HCT116 (cell line): ENCODE measurements at regions of chr11 and their contacts with region 1.

Region 1: GRCh38 chr11:44643217-44643616 is 77.8 kb downstream of the CD82 start:
- DNase-seq: no peak
- ATAC-seq: no peak
- H3K4me3 ChIP-seq: no peak overlapping the region
- H3K27ac ChIP-seq: no peak overlapping the region
- H3K4me1 ChIP-seq: no peaks in the 10 kb centered on the region
- H3K27me3 ChIP-seq: no peaks in the 10 kb centered on the region
- CTCF ChIP-seq: no peak
- POLR2A ChIP-seq: no peak
- RAD21 ChIP-seq: no peak

Region 2: GRCh38 chr11:44361813-44362212 is 281.4 kb before region 1 on chr11:
- CTCF ChIA-PET with region 1: no interaction called
- POLR2A ChIA-PET with region 1: no interaction called
- RAD21 ChIA-PET with region 1: no interaction called
- intact Hi-C with region 1: no loop called
- DNase-seq: no peak
- ATAC-seq: no peak
- H3K4me3 ChIP-seq: no peak overlapping the region
- H3K27ac ChIP-seq: no peak overlapping the region
- H3K4me1 ChIP-seq: peaks cover 0 to 10% of the 10 kb centered on the region in 2 experiments; a peak in 2 of 4 replicates
- H3K27me3 ChIP-seq: 0 out of 2 replicates have a peak, but pooled peaks cover 4% of the 10 kb centered on the region
- CTCF ChIP-seq: no peak
- POLR2A ChIP-seq: no peak
- RAD21 ChIP-seq: no peak

Region 3: GRCh38 chr11:44775366-44775984 is 132.3 kb after region 1 on chr11:
- CTCF ChIA-PET with region 1: no interaction called
- POLR2A ChIA-PET with region 1: no interaction called
- RAD21 ChIA-PET with region 1: no interaction called
- intact Hi-C with region 1: loop called (anchors 5 kb)
- DNase-seq: peak; percentile 69
- ATAC-seq: peak; percentile 99
- H3K4me3 ChIP-seq: no peak overlapping the region
- H3K27ac ChIP-seq: no peak overlapping the region
- H3K4me1 ChIP-seq: no peaks in the 10 kb centered on the region
- H3K27me3 ChIP-seq: no peaks in the 10 kb centered on the region
- CTCF ChIP-seq: peak; percentile 77 to 94 (median 88)
- POLR2A ChIP-seq: no peak
- RAD21 ChIP-seq: peak; percentile 63